ENCODE measurements at regions of chr1 and their contacts with region 1.

Region 1: DNA sequence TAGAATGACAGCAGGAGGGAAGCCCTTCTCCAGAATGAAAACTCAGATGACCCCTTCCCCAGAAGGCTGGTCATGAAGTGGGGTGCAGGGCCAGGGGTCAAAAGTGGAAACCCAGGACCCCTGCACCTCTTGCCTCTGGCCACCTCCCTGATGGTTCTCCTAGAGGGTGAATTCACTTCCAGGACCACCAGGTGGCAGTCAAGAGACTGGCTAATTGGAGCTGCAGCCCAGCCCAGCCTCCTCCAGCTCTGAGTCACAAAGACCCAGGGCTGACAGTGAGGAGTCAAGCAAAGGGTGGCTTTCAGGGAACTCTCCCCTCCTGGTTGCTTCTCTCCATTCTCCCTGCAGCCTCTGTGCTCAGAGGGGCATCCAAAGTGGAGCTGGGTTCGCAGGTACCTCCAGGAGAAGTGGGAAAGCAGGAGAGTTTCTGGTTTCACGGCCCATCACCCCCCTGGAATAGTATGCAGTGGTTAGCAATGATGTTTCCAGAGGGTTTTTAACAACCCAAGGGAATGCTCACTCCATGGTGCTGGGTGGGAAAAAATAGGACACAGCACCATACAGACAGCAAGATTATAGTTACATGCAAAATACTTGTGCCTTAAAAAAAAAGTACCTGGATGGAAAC is 6.1 kb upstream of the EPHB2 start:
- DNase-seq: no peak
- H3K4me3 ChIP-seq: no peak overlapping the region
- H3K27ac ChIP-seq: no peak overlapping the region
- H3K4me1 ChIP-seq: no peaks in the 10 kb centered on the region
- H3K27me3 ChIP-seq: no peaks in the 10 kb centered on the region
- CTCF ChIP-seq: peak; percentile 88 to 96 (median 93)
- POLR2A ChIP-seq: no peak

Region 2: GRCh38 chr1:22892789-22893188 is 188.2 kb after region 1 on chr1:
- intact Hi-C with region 1: loop called (anchors 10 kb)
- DNase-seq: no peak
- H3K4me3 ChIP-seq: no peak overlapping the region
- H3K27ac ChIP-seq: no peak overlapping the region
- H3K4me1 ChIP-seq: no peaks in the 10 kb centered on the region
- H3K27me3 ChIP-seq: no peaks in the 10 kb centered on the region
- CTCF ChIP-seq: no peak
- POLR2A ChIP-seq: no peak

Measured in vagina (tissue), 2 donors.